Right lobe of liver (tissue), 6 donors: ENCODE measurements at regions of chr9 and their contacts with region 1.

Region 1: GRCh38 chr9:109918339-109919163 is 138.6 kb downstream of the PALM2AKAP2 start:
- DNase-seq: no peak
- ATAC-seq: no peak
- H3K4me3 ChIP-seq: no peak overlapping the region
- H3K27ac ChIP-seq: no peak overlapping the region
- H3K4me1 ChIP-seq: peaks cover 0 to 27% (median 12%) of the 10 kb centered on the region in 4 donors
- H3K27me3 ChIP-seq: no peaks in the 10 kb centered on the region
- CTCF ChIP-seq: no peak
- POLR2A ChIP-seq: no peak

Region 2: DNA sequence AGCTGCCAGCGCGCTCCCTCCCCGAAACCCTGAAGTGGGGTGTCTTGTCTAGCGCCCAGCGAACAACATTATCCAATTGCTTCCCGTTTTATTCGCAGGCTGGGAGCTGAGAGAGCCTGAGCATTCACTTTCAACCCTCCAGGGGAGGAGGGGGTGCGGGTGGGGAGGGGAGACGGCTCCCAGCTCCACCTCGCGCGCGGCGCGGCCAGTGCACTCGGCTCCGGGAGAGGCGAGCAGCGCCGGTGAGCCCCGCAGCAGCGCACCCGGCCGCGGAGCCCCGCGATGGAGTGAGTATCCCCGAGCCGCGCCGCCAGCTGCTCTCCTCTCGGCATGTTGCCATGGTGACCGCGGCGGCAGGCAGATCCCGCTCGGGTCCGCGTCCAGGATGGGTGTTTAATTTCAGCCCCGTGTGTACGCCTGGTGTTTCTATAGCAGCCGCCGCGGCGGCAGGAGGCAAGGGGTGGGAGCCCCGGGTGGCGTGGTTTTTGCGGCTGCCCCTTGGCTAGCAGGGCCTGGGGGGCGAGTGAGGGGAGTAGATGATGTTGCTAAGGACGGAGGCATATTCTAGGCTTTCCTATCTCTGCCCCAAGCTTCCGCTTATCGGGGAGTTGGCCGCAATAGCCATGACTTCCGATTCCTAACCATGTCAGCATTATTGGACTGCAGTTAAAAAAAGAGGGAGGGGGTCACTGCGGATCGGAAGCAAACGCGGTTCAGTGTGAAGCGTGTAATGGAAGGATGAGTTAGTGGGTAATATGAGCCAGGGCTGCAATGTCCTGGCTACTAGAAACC is 277.8 kb before region 1 on chr9:
- intact Hi-C with region 1: no loop called
- DNase-seq: peak in 2 of 3 donors; percentile 49 to 50
- ATAC-seq: peak; percentile 47 to 59 (median 55)
- H3K4me3 ChIP-seq: peak overlapping the region; percentile 34 to 56 (median 38)
- H3K27ac ChIP-seq: no peak overlapping the region
- H3K4me1 ChIP-seq: peaks cover 0 to 9% (median 2%) of the 10 kb centered on the region in 4 donors
- H3K27me3 ChIP-seq: peaks cover 0 to 13% of the 10 kb centered on the region in 2 donors
- CTCF ChIP-seq: no peak
- POLR2A ChIP-seq: no peak

Region 3: DNA sequence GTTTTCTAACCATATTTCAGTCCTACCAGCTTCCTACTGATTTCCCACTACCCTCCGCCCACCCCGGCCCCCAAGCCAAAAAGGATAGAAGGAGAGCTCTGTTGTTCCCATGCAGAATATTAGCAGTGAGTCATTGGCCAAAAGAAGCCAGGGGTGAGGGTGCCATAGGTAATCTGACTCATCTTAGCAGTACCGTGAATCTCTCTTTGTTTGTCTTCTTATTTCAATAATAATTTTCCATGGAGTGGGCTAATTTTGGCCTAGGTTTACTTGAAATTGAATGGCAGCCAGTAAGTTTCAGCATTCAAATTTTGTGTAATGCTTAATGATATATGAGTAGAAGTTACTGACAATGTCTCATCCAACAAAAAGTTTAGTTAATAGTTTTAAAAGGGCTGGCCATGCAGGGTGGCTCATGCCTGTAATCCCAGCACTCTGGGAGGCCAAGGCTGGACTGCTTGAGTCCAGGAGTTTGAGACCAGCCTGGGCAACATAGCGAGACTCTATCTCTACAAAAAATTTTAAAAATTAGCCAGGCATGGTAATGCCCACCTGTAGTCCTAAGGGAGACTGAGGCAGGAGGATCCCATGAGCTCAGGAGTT is 215.2 kb after region 1 on chr9:
- intact Hi-C with region 1: loop called in 1 of 2 experiments (anchors 10 kb)
- DNase-seq: no peak
- ATAC-seq: peak in 1 of 4 donors; percentile 26
- H3K4me3 ChIP-seq: no peak overlapping the region
- H3K27ac ChIP-seq: no peak overlapping the region
- H3K4me1 ChIP-seq: peaks cover 0 to 3% (median 0%) of the 10 kb centered on the region in 4 donors
- H3K27me3 ChIP-seq: no peaks in the 10 kb centered on the region
- CTCF ChIP-seq: no peak
- POLR2A ChIP-seq: no peak